HepG2 (cell line): ENCODE measurements at regions of chr12 and their contacts with region 1.

Region 1: DNA sequence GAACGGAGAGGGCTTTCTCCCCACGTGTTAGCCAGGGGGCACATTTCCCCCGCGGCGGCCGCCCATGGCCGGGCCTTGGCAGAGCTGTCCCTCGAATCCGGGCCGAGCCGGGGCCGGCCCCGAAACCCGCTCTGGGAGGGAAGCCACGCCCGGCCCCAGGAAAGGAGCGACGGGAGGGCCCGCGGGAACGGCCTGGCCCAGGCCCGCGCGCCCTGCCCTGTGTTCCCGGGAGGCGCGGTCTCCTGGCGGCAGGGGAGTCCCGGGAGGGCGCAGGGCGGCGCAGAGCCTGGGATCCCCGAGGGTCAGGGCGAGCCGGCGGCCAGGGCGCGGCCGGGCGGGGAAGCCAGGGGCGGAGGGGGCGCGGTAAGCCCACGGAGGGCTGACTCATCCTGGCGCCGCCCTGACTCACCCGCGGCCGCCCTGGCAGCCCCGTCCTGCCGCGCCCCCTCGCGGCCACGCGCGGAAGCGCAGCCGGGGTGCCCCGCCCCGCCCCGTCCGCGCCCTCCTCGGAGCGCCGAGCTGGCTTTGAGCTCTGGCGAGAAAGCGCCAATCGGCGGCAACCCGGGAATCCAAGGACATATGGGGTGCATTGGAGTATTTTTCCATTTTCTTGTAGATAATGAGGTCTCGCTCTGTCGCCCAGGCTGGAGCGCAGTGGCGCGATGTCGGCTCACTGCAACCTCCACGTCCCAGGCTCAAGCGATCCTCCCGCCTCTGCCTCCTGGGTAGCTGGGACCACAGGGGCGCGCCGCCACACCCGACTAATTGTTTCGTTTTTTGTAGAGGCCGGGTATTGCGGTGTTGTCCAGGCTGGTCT is 31.8 kb upstream of the PLEKHG6 start:
- DNase-seq: peak; percentile 69
- ATAC-seq: peak; percentile 86
- H3K4me3 ChIP-seq: peak overlapping the region; percentile 51 to 71 (median 52); a peak in 5 of 6 replicates
- H3K27ac ChIP-seq: peak overlapping the region; percentile 75
- H3K4me1 ChIP-seq: peaks cover 85% of the 10 kb centered on the region
- H3K27me3 ChIP-seq: peaks cover 0 to 17% of the 10 kb centered on the region in 2 experiments; a peak in 4 of 5 replicates
- CTCF ChIP-seq: peak; percentile 73
- EP300 ChIP-seq: peak in 1 of 2 experiments; percentile 35; a peak in 2 of 4 replicates
- POLR2A ChIP-seq: peak in 1 of 2 experiments; percentile 51; a peak in 2 of 4 replicates
- RAD21 ChIP-seq: peak; percentile 99

Region 2: GRCh38 chr12:6062757-6063735 is 215.6 kb before region 1 on chr12:
- CTCF ChIA-PET with region 1: interaction called, 3 read pairs
- POLR2A ChIA-PET with region 1: interaction called, 8 read pairs
- in situ Hi-C with region 1: loop called (anchors 5 kb)
- intact Hi-C with region 1: no loop called
- DNase-seq: peak; percentile 24
- ATAC-seq: peak; percentile 73
- H3K4me3 ChIP-seq: peak overlapping the region in 1 of 3 experiments; percentile 42; a peak in 1 of 6 replicates
- H3K27ac ChIP-seq: no peak overlapping the region
- H3K4me1 ChIP-seq: peaks cover 54% of the 10 kb centered on the region
- H3K27me3 ChIP-seq: peaks cover 0 to 15% of the 10 kb centered on the region in 2 experiments; a peak in 2 of 5 replicates
- CTCF ChIP-seq: peak; percentile 95
- EP300 ChIP-seq: no peak
- POLR2A ChIP-seq: no peak
- RAD21 ChIP-seq: peak; percentile 89

Region 3: DNA sequence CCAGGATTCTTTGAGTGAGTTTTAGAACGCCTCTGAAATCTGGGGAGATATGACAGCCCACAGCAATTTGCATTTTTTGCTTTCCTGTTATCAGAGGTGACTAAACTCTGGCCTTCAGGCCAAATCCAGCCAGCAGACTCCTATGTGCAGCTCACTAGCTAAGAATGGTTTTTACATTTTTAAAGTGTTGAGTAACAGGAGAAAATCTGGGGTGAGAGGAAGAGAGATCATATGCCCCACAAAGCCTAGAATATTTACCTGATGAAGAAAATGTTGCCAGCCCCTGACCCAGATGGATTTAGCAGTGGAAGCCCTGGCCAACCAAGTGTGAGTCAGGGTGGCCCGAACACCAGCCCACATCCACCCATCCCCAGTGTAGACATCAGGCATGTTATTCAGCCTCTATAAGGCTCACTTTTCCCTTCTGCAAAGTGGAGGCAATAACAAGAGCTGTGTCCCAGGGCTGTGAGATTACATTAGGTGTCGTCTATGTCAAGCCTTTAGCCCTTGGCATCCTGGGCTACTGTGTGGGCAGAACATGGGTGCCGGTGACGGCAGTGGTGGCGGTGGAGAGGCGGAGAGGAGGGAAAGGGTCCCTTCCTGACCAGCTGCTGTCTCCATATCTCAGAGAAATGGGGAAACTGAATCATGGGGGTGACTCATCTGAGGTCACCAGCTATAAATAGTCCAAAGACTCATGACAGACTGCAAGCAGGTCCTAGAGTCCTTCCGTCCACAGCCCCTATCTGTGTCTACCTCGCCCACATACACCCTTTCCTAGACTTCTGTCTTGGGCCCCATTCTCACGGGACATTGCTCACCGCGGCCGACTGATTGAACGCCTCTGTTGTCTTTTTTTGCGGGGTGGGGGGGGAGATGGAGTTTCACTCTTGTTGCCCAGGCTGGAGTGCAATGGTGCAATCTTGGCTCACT is 111.1 kb before region 1 on chr12:
- CTCF ChIA-PET with region 1: no interaction called
- POLR2A ChIA-PET with region 1: no interaction called
- in situ Hi-C with region 1: no loop called
- intact Hi-C with region 1: no loop called
- DNase-seq: peak; percentile 30
- ATAC-seq: peak; percentile 53
- H3K4me3 ChIP-seq: no peak overlapping the region
- H3K27ac ChIP-seq: no peak overlapping the region
- H3K4me1 ChIP-seq: peaks cover 9% of the 10 kb centered on the region; the same call in 1 of the 2 replicates
- H3K27me3 ChIP-seq: peaks cover 2 to 41% of the 10 kb centered on the region in 2 experiments
- CTCF ChIP-seq: no peak
- EP300 ChIP-seq: peak in 1 of 2 experiments; percentile 6; a peak in 1 of 4 replicates
- POLR2A ChIP-seq: no peak
- RAD21 ChIP-seq: no peak

Region 4: DNA sequence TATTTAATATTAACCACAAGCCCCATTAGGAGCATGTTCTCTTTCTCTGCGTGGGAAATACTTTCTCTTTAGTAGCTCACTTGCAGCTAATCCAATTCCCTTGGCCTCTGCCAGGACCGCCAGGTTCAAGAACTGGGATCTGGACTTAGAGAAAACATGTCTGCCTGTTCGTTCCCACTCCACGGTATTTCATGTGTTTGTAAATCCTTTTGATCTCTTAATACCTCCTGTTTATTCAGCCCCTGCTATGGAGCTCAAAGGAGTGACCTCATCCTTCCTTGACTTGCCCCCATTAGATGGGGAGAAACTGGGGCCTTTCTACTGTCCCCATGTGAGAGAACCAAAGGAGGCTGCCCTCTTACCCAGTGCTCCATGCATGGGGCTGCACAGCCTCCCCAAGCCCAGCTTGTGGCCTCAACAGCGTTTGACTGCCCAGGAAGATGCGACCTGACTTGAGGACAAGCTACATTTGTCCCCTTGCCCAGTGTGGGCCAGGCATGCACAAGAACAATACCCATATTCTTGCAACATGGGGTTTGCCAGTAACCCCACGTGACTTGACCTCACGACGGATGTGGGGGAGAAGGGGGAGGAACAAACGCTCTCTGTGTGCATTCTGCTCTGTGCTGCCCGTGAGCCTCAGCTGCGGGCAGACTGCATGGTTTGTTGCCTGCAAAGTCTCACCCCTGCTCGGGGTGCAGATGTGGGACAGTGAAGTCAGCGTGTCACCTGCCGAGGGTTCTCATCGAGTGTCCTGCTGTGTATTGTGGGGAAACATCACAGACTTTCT is 48.1 kb before region 1 on chr12:
- CTCF ChIA-PET with region 1: no interaction called
- POLR2A ChIA-PET with region 1: interaction called, 8 read pairs
- in situ Hi-C with region 1: loop called (anchors 5 kb)
- intact Hi-C with region 1: no loop called
- DNase-seq: peak; percentile 92
- ATAC-seq: peak; percentile 76
- H3K4me3 ChIP-seq: 0 out of 6 replicates have a peak overlapping the region, but pooled peaks of 1 of the 3 experiments have one; percentile 8
- H3K27ac ChIP-seq: peak overlapping the region; percentile 69
- H3K4me1 ChIP-seq: peaks cover 97% of the 10 kb centered on the region
- H3K27me3 ChIP-seq: no peaks in the 10 kb centered on the region
- CTCF ChIP-seq: 0 out of 2 replicates have a peak, but pooled peaks have one; percentile 3
- EP300 ChIP-seq: peak in 1 of 2 experiments; percentile 59; a peak in 2 of 4 replicates
- POLR2A ChIP-seq: peak in 1 of 2 experiments; percentile 39; a peak in 2 of 4 replicates
- RAD21 ChIP-seq: peak; percentile 13; the same call in 1 of the 2 replicates

Region 5: DNA sequence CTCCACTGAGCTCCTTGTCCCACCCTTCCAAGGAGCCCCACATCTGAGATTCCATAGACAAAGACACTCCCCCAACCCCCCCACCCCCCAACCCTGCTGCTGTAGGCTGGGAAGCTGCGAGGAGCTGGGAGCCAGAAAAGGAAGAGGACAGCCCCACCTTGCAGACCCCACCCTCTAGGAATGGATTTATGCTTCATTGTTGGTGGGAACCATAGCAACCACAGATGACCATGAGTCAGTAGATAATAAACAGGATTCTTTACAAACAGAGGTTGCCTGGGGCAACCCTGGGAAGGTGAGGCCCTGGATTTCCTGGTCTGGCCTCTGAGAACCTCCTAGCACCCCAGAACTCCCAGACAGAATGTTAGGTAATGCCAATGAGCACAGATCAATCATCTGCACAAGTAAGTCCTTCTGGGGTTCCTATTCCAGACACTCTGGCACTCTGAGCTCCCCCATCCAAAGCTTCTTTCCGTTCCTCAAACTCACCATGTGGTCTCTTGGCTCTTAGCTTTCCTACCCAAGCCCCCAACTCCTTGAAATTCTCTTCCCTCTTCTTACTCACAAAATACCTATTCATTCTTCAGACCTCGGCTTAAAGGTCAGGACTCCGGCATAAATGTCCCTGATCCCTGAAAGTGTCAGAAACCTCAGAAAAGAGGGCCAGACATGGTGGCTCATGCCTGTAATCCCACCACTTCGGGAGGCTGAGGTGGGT is 16.6 kb after region 1 on chr12:
- CTCF ChIA-PET with region 1: no interaction called
- POLR2A ChIA-PET with region 1: interaction called, 11 read pairs
- in situ Hi-C with region 1: no loop called
- intact Hi-C with region 1: no loop called
- DNase-seq: peak; percentile 98
- ATAC-seq: peak; percentile 91
- H3K4me3 ChIP-seq: peak overlapping the region; percentile 5 to 51 (median 33); a peak in 4 of 6 replicates
- H3K27ac ChIP-seq: peak overlapping the region; percentile 100
- H3K4me1 ChIP-seq: peaks cover 75% of the 10 kb centered on the region
- H3K27me3 ChIP-seq: no peaks in the 10 kb centered on the region
- CTCF ChIP-seq: no peak
- EP300 ChIP-seq: peak; percentile 81 to 94
- POLR2A ChIP-seq: peak; percentile 19 to 79; a peak in 3 of 4 replicates
- RAD21 ChIP-seq: no peak